MCF 10A (cell line): ENCODE measurements at regions of chr3 and their contacts with region 1.

Region 1: DNA sequence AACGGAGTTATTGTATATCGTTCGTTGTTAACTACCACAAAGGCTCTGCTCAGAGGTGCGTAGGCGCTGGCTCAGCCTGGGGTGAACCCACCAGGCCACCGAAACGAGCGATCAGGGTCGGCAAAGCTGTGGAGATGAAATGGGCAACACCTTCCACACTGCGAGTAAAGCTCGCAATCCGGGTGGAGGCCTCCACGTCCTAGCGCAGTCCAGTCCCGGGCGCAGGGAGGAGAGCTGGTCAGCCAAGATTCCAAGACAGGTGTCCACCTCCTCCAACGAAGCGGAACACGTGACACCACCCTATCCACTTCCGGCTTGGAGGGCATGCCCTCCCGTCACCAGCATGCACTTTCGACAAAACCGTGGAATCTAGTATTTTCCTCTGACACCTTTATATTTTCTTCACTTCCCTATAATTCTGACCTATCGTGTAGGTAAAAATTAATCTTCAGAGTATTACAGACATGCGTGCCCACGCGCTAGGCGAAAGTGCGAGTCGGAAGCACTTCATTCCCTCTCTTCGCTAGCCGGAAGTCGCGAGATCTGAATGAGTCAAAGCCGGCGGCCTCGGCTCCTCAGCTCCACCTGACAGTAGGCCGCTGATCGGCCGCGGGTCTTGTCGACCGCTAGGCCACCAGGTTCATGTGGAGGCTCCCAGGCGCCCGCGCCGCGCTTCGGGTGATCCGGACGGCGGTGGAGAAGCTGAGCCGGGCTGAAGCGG is at the start of gene PDE12:
- DNase-seq: peak; percentile 92
- H3K4me3 Mint-ChIP-seq: peak within 1 kb of the TSS; percentile 63
- H3K27ac Mint-ChIP-seq: peak within 1 kb of the TSS; percentile 96
- H3K4me1 Mint-ChIP-seq: peaks cover 12% of the 10 kb centered on the region
- H3K27me3 Mint-ChIP-seq: no peaks in the 10 kb centered on the region
- CTCF ChIP-seq: no peak
- total RNA-seq, gene PDE12: 23.0 and 23.1 TPM in 2 replicates

Region 2: GRCh38 chr3:57227204-57227929 is 328.5 kb before region 1 on chr3 and contains the start of gene APPL1:
- CTCF ChIA-PET with region 1: no interaction called
- POLR2A ChIA-PET with region 1: interaction called, 33 read pairs
- intact Hi-C with region 1: no loop called
- DNase-seq: peak; percentile 90
- H3K4me3 Mint-ChIP-seq: peak within 1 kb of the TSS; percentile 84
- H3K27ac Mint-ChIP-seq: peak within 1 kb of the TSS; percentile 75
- H3K4me1 Mint-ChIP-seq: peaks cover 11% of the 10 kb centered on the region
- H3K27me3 Mint-ChIP-seq: no peaks in the 10 kb centered on the region
- CTCF ChIP-seq: peak; percentile 5
- total RNA-seq, gene APPL1: 26.4 and 35.4 TPM in 2 replicates

Region 3: DNA sequence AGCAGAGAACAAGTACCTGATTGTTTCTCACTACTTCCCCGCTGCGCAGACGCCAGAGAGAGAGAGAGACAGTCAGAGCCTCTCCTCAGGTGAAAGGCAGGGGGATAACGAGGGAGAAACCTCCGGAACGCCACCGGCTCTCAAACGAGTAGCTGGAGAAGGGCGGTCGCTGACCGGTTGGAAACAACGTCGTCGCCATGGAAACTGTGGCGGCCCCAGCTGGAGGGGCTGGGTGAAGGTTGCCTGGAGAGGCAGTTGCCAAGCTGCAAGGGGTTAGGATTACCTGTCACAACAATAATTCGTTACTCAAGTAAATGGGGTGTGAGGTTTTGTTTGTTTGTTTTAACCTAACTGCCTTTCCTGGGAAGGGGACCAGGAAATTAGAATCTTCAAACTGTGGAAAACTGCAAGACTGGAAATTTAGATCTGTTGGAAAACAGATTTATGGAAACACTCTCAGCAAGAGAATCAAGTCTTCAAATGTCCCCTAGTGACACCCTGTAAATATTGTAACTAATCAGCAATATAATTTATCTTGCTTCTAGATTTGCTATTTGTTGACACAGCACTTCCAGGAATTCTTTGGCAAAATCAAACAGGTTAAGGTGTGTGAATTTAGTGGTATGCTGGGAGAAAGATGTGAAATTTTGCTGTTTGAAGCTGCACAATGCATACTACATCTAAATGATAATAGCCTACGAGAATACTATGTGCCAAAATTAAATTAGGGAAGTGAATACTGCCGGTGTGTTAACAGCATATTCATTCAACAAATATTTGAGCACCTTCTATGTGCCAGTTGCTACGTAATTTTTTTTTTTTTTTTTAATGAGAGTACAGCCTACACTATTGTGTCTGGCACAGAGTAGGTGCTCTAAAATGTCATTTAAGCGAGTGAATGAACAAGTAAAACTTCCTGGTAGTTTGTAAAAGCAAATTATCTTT is 11.4 kb before region 1 on chr3 and contains the start of gene DNAH12:
- CTCF ChIA-PET with region 1: interaction called, 4 read pairs
- POLR2A ChIA-PET with region 1: interaction called, 20 read pairs
- intact Hi-C with region 1: no loop called
- DNase-seq: no peak
- H3K4me3 Mint-ChIP-seq: peak within 1 kb of the TSS; percentile 54
- H3K27ac Mint-ChIP-seq: no peak within 1 kb of the TSS
- H3K4me1 Mint-ChIP-seq: no peaks in the 10 kb centered on the region
- H3K27me3 Mint-ChIP-seq: no peaks in the 10 kb centered on the region
- CTCF ChIP-seq: no peak
- total RNA-seq, gene DNAH12: 0.47 and 0.58 TPM in 2 replicates

Region 4: DNA sequence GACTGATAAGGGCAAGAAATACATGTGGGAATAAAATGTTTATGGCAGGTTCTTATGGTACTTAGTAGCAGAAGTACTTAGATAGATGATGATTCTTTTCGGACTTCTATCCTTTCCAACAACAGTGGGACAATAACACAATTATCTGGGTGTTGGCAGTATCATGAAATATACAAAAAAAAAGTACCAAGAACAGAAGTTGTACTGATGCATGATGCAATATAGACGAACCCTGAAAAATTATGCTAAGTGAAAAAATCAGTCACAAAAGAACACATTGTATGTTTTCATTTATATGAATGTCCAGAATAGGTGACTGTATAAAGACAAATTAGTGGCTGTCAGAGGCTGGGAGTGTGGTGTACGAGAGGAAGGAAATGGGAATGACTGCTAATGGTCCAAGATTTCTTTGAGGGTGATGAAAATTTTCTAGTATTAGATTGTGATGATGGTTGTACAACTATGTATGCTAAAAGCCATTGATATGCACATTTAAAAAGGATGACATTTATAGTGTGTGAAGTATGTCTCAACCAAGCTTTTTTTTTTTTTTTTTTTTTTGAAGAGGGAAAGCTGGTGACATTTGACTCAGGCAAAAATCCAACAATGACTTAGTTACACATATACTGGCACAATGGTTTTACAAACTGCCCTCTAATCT is 20.2 kb after region 1 on chr3:
- CTCF ChIA-PET with region 1: interaction called, 4 read pairs
- POLR2A ChIA-PET with region 1: interaction called, 14 read pairs
- intact Hi-C with region 1: no loop called
- DNase-seq: no peak
- H3K4me3 Mint-ChIP-seq: no peak overlapping the region
- H3K27ac Mint-ChIP-seq: peak overlapping the region; percentile 37
- H3K4me1 Mint-ChIP-seq: peaks cover 6% of the 10 kb centered on the region
- H3K27me3 Mint-ChIP-seq: no peaks in the 10 kb centered on the region
- CTCF ChIP-seq: no peak

Region 5: DNA sequence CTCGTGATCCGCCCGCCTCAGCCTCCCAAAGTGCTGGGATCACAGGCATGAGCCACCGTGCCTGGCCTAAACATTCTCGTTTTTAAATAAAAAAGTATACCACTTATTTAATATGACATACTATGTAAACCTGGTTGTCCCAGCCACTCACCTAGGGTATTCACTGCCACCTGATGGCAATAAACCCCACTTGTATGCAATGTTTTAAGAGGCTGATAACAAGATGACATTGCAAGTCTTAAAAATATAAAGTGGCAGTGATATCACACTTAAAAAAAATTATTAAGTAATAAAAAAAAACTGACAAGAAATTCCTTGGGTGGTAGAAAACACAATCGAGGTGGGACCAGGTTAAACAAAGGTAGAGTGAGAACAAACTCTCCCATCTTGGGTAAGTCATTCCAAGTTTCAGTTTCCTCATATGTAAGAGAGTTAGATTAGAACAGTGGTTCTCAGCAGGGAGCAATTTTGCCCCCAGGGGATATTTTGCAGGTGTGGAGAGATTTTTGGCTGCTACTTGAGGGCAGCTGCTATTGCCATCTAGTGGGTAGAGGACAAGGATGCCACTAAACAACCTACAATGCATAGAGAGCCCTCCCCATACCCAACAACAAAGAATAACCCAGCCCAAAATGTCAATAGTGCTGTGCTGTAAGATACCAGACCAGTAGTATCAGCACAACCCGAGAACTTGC is 26.7 kb after region 1 on chr3:
- CTCF ChIA-PET with region 1: interaction called, 3 read pairs
- POLR2A ChIA-PET with region 1: interaction called, 14 read pairs
- intact Hi-C with region 1: no loop called
- DNase-seq: peak; percentile 89
- H3K4me3 Mint-ChIP-seq: peak overlapping the region; percentile 19
- H3K27ac Mint-ChIP-seq: peak overlapping the region; percentile 46
- H3K4me1 Mint-ChIP-seq: peaks cover 10% of the 10 kb centered on the region
- H3K27me3 Mint-ChIP-seq: no peaks in the 10 kb centered on the region
- CTCF ChIP-seq: peak; percentile 11